H1 (cell line): ENCODE measurements at regions of chr9 and their contacts with region 1.

Region 1: GRCh38 chr9:127586537-127586936 is 25.5 kb upstream of the STXBP1 start:
- DNase-seq: peak in 1 of 2 experiments; percentile 75
- H3K4me3 ChIP-seq: no peak overlapping the region
- H3K27ac ChIP-seq: no peak overlapping the region
- H3K4me1 ChIP-seq: peaks cover 0 to 3% (median 0%) of the 10 kb centered on the region in 4 experiments; a peak in 2 of 7 replicates
- H3K27me3 ChIP-seq: no peaks in the 10 kb centered on the region
- CTCF ChIP-seq: peak; percentile 88 to 95 (median 94)
- EP300 ChIP-seq: no peak
- POLR2A ChIP-seq: no peak
- RAD21 ChIP-seq: peak; percentile 89 to 92

Region 2: DNA sequence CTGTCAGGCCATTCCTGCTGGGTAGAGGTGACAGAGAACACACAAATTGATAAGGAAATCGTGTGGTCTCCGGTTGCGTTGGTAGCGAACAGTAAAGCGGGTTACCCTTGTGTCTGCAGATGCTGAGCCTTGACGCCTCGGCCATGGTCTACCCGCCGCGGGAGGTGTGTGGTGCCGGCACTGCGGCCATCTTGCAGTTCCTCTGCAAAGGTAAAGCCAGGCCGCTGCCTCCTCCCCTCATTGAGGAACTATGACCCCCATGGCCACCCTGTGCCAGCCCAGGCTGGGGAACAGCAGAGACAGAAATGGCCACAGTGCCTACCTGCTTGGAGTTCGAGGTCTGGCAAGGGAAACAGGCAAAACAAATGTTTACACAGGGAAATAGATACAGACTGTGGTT is 118.9 kb before region 1 on chr9:
- CTCF ChIA-PET with region 1: no interaction called
- POLR2A ChIA-PET with region 1: no interaction called
- DNase-seq: no peak
- H3K4me3 ChIP-seq: no peak overlapping the region
- H3K27ac ChIP-seq: no peak overlapping the region
- H3K4me1 ChIP-seq: peaks cover 0 to 3% (median 0%) of the 10 kb centered on the region in 4 experiments; a peak in 1 of 7 replicates
- H3K27me3 ChIP-seq: no peaks in the 10 kb centered on the region; a peak in 1 of 7 replicates
- CTCF ChIP-seq: no peak
- EP300 ChIP-seq: no peak
- POLR2A ChIP-seq: no peak
- RAD21 ChIP-seq: no peak

Region 3: DNA sequence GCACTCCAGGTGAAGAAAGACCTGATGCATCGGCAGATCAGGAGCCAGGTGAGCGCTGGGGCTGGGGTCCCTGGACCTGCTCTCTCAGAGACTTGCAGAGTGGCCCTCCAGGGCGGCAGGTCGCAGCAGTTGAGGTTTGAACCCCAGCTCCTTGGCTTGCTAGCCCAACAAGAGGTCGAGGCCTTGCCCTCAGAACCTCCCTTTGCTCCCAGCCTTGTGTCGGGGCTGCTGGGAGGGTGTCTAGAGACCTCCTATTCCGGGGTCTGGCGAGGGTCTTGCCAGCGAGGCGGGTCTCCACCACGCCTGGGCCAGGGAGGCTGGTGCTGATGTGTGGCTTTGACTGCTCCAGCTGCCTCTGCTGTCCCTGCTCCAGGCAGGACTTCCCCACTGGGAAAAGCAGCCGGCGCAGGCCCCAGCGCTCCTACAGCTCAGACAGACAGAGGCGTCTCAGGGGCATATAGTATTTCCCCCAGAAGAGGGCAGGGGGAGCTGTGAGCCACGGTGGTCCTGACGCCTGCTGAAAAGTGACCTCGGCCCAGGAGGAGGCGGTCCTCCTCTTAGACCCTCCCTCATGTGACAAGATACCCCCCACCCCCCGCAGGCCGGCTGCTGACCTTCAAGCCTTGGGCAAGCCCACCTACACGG is 96.9 kb before region 1 on chr9:
- CTCF ChIA-PET with region 1: interaction called, 22 read pairs
- POLR2A ChIA-PET with region 1: no interaction called
- DNase-seq: peak; percentile 64 to 79
- H3K4me3 ChIP-seq: no peak overlapping the region
- H3K27ac ChIP-seq: 0 out of 2 replicates have a peak overlapping the region, but pooled peaks have one; percentile 37
- H3K4me1 ChIP-seq: peaks cover 0 to 7% (median 2%) of the 10 kb centered on the region in 4 experiments; a peak in 5 of 7 replicates
- H3K27me3 ChIP-seq: no peaks in the 10 kb centered on the region
- CTCF ChIP-seq: peak; percentile 69 to 77 (median 72)
- EP300 ChIP-seq: no peak
- POLR2A ChIP-seq: no peak
- RAD21 ChIP-seq: peak; percentile 53 to 67

Region 4: GRCh38 chr9:127519301-127520166 is 67.0 kb before region 1 on chr9:
- CTCF ChIA-PET with region 1: interaction called, 73 read pairs
- POLR2A ChIA-PET with region 1: no interaction called
- DNase-seq: no peak
- H3K4me3 ChIP-seq: no peak overlapping the region
- H3K27ac ChIP-seq: no peak overlapping the region
- H3K4me1 ChIP-seq: peaks cover 2 to 7% (median 5%) of the 10 kb centered on the region in 4 experiments; a peak in 5 of 7 replicates
- H3K27me3 ChIP-seq: no peaks in the 10 kb centered on the region
- CTCF ChIP-seq: no peak
- EP300 ChIP-seq: no peak
- POLR2A ChIP-seq: no peak
- RAD21 ChIP-seq: no peak

Region 5: DNA sequence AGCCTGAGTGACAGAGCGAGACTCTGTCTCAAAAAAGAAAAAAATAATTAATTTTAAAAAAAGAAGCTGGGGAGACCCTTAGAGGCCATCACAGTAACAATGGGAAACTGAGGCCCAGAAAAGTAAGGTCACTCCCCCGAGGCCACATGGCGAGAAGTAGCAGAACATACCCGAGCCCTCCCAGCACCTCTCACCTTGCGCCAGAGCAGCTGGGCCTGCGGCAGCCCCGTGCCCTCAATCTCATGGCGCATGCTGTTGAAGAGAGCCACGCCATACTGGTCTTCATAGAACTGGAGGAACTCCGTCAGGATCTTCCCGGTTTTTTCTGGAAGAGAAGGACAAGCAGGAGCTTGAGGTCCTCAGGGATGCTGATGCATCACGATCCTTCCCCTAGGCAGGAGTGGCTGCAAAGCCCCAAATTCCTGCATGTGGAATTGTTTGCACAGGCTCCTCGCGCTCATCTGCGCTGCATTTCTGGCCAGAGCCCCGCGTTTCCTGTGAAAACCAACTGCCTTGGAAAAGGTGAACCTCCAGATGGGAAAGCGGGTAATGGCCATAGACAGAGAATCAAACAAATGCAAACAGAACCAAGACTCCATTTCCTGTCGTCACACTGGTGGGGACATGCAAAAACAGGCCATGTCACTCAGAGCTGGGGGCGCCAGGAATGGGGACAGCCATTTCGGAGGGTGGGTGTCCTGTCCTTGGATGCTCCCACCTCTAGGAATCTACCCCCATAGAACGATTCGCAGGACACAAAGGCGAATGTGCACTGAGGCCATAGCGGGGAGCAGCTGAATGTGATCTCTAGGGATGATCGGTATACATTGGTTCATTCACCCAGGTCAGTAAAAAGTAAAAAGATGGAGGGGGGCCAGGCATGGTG is 54.8 kb before region 1 on chr9:
- CTCF ChIA-PET with region 1: interaction called, 89 read pairs
- POLR2A ChIA-PET with region 1: no interaction called
- DNase-seq: no peak
- H3K4me3 ChIP-seq: no peak overlapping the region
- H3K27ac ChIP-seq: 0 out of 2 replicates have a peak overlapping the region, but pooled peaks have one; percentile 13
- H3K4me1 ChIP-seq: peaks cover 6 to 27% (median 14%) of the 10 kb centered on the region in 4 experiments
- H3K27me3 ChIP-seq: no peaks in the 10 kb centered on the region
- CTCF ChIP-seq: no peak
- EP300 ChIP-seq: no peak
- POLR2A ChIP-seq: no peak
- RAD21 ChIP-seq: no peak

Region 6: GRCh38 chr9:127555768-127556397 is 30.7 kb before region 1 on chr9:
- CTCF ChIA-PET with region 1: interaction called, 20 read pairs
- POLR2A ChIA-PET with region 1: interaction called, 3 read pairs
- DNase-seq: no peak
- H3K4me3 ChIP-seq: no peak overlapping the region
- H3K27ac ChIP-seq: peak overlapping the region; percentile 35; the same call in 1 of the 2 replicates
- H3K4me1 ChIP-seq: peaks cover 0 to 20% (median 12%) of the 10 kb centered on the region in 4 experiments; a peak in 6 of 7 replicates
- H3K27me3 ChIP-seq: no peaks in the 10 kb centered on the region
- CTCF ChIP-seq: no peak
- EP300 ChIP-seq: no peak
- POLR2A ChIP-seq: no peak
- RAD21 ChIP-seq: no peak

Region 7: DNA sequence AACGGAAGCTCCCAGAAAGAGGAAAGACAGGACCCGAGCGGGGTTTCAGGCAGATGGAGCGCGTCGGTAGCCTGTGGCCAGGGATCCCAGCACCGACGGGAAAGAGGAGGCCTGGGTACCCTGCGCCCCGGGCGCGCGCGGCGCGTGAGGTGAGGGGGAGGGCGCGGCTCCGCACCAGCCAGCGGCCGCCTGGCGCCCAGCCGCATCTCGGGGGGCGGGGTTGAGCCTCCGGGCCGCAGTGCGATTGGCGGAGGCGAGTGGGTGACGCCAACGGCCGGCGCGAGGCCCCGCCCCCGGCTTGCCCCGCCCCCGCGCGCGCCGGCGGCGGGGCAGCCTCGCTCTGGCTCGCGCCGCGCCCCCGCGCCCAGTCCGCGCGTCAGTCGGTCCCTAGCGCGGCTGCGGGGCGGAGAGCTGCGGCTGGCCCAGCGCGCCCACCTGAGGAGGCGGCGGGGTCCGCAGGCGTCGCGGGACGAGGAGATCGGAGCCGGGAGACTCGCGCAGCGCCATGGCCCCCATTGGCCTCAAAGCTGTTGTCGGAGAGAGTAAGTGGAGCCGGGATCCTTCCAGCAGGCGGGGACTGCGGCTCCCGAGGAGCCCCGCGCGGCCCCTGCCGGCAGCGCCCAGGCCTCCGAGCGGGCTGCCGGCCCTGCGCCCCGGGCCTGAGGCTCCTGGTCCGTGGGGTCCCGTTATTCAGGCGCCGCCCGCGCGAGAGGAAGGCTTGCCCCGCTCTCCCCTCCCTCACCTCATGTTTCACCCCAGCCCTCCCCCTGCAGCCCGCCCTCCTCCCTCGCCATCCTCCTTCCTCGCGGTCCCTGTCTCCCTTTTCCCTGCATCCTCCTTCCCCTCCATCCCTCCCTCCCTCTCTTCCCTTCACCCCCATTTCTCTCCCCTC is 25.6 kb after region 1 on chr9 and contains the start of gene STXBP1:
- CTCF ChIA-PET with region 1: interaction called, 61 read pairs
- POLR2A ChIA-PET with region 1: interaction called, 3 read pairs
- DNase-seq: peak in 1 of 2 experiments; percentile 91
- H3K4me3 ChIP-seq: peak within 1 kb of the TSS; percentile 70 to 94 (median 80)
- H3K27ac ChIP-seq: no peak within 1 kb of the TSS
- H3K4me1 ChIP-seq: peaks cover 0 to 18% (median 8%) of the 10 kb centered on the region in 4 experiments; a peak in 5 of 7 replicates
- H3K27me3 ChIP-seq: peaks cover 0 to 13% (median 6%) of the 10 kb centered on the region in 4 experiments; a peak in 4 of 7 replicates
- CTCF ChIP-seq: 0 out of 4 replicates have a peak, but pooled peaks of 1 of the 3 experiments have one; percentile 6
- EP300 ChIP-seq: no peak
- POLR2A ChIP-seq: peak; percentile 39 to 62
- RAD21 ChIP-seq: peak in 1 of 2 experiments; percentile 11; a peak in 2 of 4 replicates
- total RNA-seq, gene STXBP1: 60.9 and 61.9 TPM in 2 replicates

Region 8: GRCh38 chr9:127734747-127735529 is 148.4 kb after region 1 on chr9 and contains the start of gene TOR2A:
- CTCF ChIA-PET with region 1: interaction called, 34 read pairs
- POLR2A ChIA-PET with region 1: interaction called, 4 read pairs
- DNase-seq: peak; percentile 96 to 99
- H3K4me3 ChIP-seq: peak within 1 kb of the TSS; percentile 35 to 78 (median 67)
- H3K27ac ChIP-seq: peak within 1 kb of the TSS; percentile 46; the same call in 1 of the 2 replicates
- H3K4me1 ChIP-seq: peaks cover 3 to 11% (median 6%) of the 10 kb centered on the region in 4 experiments; a peak in 6 of 7 replicates
- H3K27me3 ChIP-seq: no peaks in the 10 kb centered on the region
- CTCF ChIP-seq: peak in 2 of 3 experiments; percentile 92 to 99; a peak in 3 of 4 replicates
- EP300 ChIP-seq: peak in 1 of 2 experiments; percentile 68; a peak in 1 of 3 replicates
- POLR2A ChIP-seq: no peak
- RAD21 ChIP-seq: peak; percentile 89 to 93
- total RNA-seq, gene TOR2A: 18.4 and 18.7 TPM in 2 replicates